Upper lobe of right lung (tissue), 1 donor: ENCODE measurements at regions of chr7 and their contacts with region 1.

Region 1: GRCh38 chr7:27143023-27143949 is at the start of gene HOXA5:
- DNase-seq: peak; percentile 77
- ATAC-seq: peak; percentile 83
- H3K4me3 ChIP-seq: peak within 1 kb of the TSS; percentile 70
- H3K27ac ChIP-seq: peak within 1 kb of the TSS; percentile 96
- H3K4me1 ChIP-seq: peaks cover 5% of the 10 kb centered on the region
- H3K27me3 ChIP-seq: peaks cover 41% of the 10 kb centered on the region
- CTCF ChIP-seq: peak; percentile 80
- total RNA-seq, gene HOXA5: 16.0 TPM

Region 2: DNA sequence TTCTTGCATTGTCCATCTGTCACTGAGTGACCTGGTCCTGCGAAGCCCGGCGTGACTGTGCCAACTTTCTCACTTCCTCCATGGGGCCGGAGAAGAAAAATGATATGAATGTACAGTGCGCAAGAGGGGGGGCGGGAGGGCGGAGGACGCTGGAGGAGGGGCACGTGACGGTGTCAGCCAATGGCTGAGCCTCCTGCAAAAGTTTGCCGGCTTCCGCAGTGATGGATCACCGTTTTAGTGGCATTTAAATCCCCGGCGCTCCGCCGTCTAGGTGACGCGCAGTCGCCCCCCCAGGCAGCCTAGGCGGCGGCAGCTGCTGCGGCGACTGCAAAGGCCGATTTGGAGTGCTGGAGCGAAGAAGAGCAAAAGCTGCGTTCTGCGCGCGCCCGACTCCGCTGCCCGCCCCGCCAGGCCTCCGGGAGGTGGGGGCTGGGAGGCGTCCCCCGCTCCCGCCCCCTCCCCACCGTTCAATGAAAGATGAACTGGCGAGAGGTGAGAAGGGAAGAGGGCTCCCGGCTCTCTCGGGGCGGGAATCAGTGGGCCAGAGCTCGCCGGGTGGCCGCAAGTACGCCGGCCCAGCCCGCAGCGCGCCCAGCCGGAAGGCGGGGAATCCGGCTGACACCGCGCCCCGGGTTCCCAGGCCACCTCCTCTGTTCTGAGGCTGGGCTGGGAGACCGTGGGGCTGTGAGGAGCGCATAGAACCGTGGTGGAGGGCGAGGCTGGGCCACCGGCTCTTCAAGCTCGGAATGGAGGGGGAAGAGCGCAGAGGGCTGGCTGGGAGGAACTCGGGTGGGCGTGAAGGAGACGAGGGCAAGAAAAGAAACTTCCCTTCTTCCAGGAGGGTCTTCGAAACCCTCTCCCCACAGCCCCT is 47.2 kb before region 1 on chr7 and contains the start of gene HOXA1:
- intact Hi-C with region 1: loop called (anchors 5 kb)
- DNase-seq: peak; percentile 85
- ATAC-seq: peak; percentile 87
- H3K4me3 ChIP-seq: peak within 1 kb of the TSS; percentile 91
- H3K27ac ChIP-seq: peak within 1 kb of the TSS; percentile 91
- H3K4me1 ChIP-seq: peaks cover 8% of the 10 kb centered on the region
- H3K27me3 ChIP-seq: no peaks in the 10 kb centered on the region
- CTCF ChIP-seq: no peak
- total RNA-seq, gene HOXA1: 0.75 TPM